K562 (cell line): ENCODE measurements at regions of chr6 and their contacts with region 1.

Region 1: DNA sequence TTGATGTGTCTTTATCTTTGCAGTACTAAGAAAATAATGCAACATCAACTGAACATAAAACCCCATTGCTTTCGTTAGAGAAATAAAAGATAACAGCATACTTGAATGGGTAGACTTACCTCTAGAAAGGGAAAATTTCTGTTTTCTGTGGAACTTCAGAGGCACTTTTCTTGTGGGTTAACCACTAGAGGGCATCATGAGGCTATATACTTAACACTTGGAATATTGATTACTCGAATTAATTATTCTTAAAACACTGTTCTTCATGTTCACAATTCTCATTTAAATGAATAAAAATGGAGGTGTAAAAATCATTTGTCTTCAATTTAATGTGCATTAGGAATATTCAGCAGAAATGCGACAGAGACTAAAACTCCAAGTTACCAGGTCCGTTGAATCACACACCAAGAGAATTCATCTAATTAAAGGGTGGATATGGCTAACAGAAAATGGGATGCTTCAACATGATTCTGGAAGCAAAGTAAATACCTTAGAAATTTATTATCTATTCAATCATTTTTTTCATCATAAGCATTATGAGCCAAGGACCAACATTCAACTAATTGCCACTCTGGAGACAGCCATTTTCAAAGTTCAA is 330.8 kb upstream of the PREP start:
- DNase-seq: peak; percentile 12 to 47 (median 16)
- ATAC-seq: no peak
- H3K4me3 ChIP-seq: no peak overlapping the region
- H3K27ac ChIP-seq: no peak overlapping the region
- H3K4me1 ChIP-seq: no peaks in the 10 kb centered on the region
- H3K27me3 ChIP-seq: no peaks in the 10 kb centered on the region
- CTCF ChIP-seq: peak; percentile 44 to 72 (median 48); a peak in 4 of 6 replicates
- EP300 ChIP-seq: no peak
- POLR2A ChIP-seq: no peak
- RAD21 ChIP-seq: peak; percentile 65 to 88

Region 2: DNA sequence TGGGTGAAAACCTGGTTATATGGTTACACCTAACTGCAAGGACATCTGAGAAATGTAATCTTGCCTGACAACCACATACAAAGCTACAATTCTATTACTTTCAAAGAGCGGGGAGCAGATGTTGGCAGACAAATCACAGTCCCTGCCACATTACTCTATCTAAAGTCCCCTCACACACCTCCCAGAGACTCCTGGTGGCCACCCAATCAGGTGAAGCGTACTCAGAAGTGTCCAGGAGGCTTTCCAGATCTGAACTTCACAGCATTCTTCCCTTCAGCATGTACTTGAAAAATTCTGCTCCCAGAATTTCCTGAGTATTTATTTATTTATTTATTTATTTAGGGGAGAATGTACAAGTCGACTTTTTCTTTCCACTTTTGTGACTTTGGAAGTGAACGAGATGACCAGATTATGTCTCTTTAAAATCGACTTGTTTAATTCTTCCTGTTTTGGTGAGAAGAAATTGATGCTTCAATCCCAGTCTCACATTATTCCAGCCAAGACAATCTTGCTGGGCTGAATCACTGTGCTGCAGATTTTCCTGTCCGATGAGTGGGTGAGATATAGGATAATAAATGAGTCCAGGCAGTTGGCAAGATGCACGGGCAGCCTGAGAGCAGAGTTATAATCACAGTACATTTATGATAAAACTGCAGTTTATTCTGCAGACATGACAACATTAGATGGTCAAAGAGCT is 506.9 kb before region 1 on chr6:
- CTCF ChIA-PET with region 1: no interaction called
- POLR2A ChIA-PET with region 1: no interaction called
- in situ Hi-C with region 1: no loop called
- intact Hi-C with region 1: no loop called
- DNase-seq: no peak
- ATAC-seq: no peak
- H3K4me3 ChIP-seq: no peak overlapping the region
- H3K27ac ChIP-seq: no peak overlapping the region
- H3K4me1 ChIP-seq: no peaks in the 10 kb centered on the region
- H3K27me3 ChIP-seq: peaks cover 0 to 6% of the 10 kb centered on the region in 2 experiments; a peak in 2 of 5 replicates
- CTCF ChIP-seq: no peak
- EP300 ChIP-seq: no peak
- POLR2A ChIP-seq: no peak
- RAD21 ChIP-seq: no peak

Region 3: DNA sequence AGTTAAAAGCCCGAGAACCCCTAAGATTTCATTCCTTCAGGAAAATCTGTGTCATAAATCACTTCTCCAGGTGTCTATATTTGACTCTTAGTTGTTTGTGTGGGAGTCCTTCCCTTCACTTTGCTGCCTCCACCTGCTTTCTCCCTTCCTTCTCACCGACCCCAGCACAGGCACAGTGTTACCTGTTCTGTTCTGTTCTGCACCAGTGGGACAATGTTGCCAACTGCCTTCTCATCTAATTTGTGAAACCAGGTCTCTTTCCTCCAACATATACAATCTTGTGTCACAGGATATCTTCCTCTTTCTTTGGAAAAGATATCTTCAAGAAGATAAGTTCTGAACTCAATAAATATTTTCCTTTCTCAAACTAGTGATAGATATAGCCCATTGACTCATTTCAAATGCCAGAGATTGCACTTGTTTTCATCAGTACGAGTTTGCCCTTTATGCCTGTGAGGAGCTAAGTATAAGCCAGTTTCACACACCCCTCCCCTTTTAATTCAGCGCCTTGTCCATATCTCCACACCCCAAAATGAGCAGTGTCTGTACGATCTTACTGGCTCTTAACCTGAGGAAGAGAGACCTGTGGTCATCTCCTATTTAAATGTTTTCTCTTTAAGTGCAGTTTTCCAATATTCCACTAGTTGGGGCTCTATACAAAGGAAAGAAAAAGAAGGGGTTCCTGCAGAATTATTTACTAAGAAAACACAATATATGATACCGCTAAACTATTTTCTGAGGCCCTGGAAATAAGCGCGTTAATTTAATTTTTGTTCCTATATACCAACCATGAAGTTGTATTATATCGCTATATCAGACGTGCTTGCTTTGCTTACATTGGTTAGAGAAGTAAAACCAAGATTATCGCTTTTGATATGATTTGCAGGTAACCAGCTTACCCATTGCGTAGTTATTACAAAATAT is 249.2 kb before region 1 on chr6:
- CTCF ChIA-PET with region 1: no interaction called
- POLR2A ChIA-PET with region 1: no interaction called
- in situ Hi-C with region 1: no loop called
- intact Hi-C with region 1: loop called (anchors 5 kb)
- DNase-seq: peak; percentile 25 to 31 (median 28)
- ATAC-seq: peak; percentile 76
- H3K4me3 ChIP-seq: no peak overlapping the region
- H3K27ac ChIP-seq: no peak overlapping the region
- H3K4me1 ChIP-seq: no peaks in the 10 kb centered on the region; a peak in 2 of 5 replicates
- H3K27me3 ChIP-seq: peaks cover 2 to 4% of the 10 kb centered on the region in 2 experiments; a peak in 1 of 5 replicates
- CTCF ChIP-seq: peak; percentile 61 to 90 (median 67); a peak in 5 of 6 replicates
- EP300 ChIP-seq: no peak
- POLR2A ChIP-seq: no peak
- RAD21 ChIP-seq: peak; percentile 90 to 91

Region 4: GRCh38 chr6:105748737-105749161 is 15.1 kb after region 1 on chr6:
- CTCF ChIA-PET with region 1: no interaction called
- POLR2A ChIA-PET with region 1: no interaction called
- in situ Hi-C with region 1: no loop called
- intact Hi-C with region 1: no loop called
- DNase-seq: peak in 1 of 4 experiments; percentile 11
- ATAC-seq: peak; percentile 42; the same call in 2 of the 3 replicates
- H3K4me3 ChIP-seq: no peak overlapping the region
- H3K27ac ChIP-seq: no peak overlapping the region
- H3K4me1 ChIP-seq: peaks cover 0 to 15% of the 10 kb centered on the region in 2 experiments; a peak in 3 of 5 replicates
- H3K27me3 ChIP-seq: 0 out of 5 replicates have a peak, but pooled peaks cover 0 to 4% of the 10 kb centered on the region in 2 experiments
- CTCF ChIP-seq: no peak
- EP300 ChIP-seq: no peak
- POLR2A ChIP-seq: no peak
- RAD21 ChIP-seq: no peak

Region 5: GRCh38 chr6:105835373-105835772 is 101.7 kb after region 1 on chr6:
- CTCF ChIA-PET with region 1: no interaction called
- POLR2A ChIA-PET with region 1: no interaction called
- in situ Hi-C with region 1: no loop called
- intact Hi-C with region 1: loop called (anchors 1 kb)
- DNase-seq: peak; percentile 40 to 79 (median 62)
- ATAC-seq: peak; percentile 97
- H3K4me3 ChIP-seq: no peak overlapping the region
- H3K27ac ChIP-seq: no peak overlapping the region
- H3K4me1 ChIP-seq: peaks cover 0 to 16% of the 10 kb centered on the region in 2 experiments; a peak in 3 of 5 replicates
- H3K27me3 ChIP-seq: no peaks in the 10 kb centered on the region
- CTCF ChIP-seq: peak; percentile 73 to 80 (median 79)
- EP300 ChIP-seq: peak; percentile 39; the same call in 1 of the 2 replicates
- POLR2A ChIP-seq: no peak
- RAD21 ChIP-seq: peak; percentile 75 to 87

Region 6: GRCh38 chr6:106223300-106223930 is 489.8 kb after region 1 on chr6:
- CTCF ChIA-PET with region 1: no interaction called
- POLR2A ChIA-PET with region 1: no interaction called
- in situ Hi-C with region 1: no loop called
- intact Hi-C with region 1: loop called (anchors 5 kb)
- DNase-seq: peak; percentile 13 to 71 (median 30)
- ATAC-seq: peak; percentile 81
- H3K4me3 ChIP-seq: no peak overlapping the region
- H3K27ac ChIP-seq: no peak overlapping the region
- H3K4me1 ChIP-seq: peaks cover 0 to 5% of the 10 kb centered on the region in 2 experiments; a peak in 1 of 5 replicates
- H3K27me3 ChIP-seq: no peaks in the 10 kb centered on the region
- CTCF ChIP-seq: peak in 2 of 3 experiments; percentile 61 to 80; a peak in 5 of 6 replicates
- EP300 ChIP-seq: no peak
- POLR2A ChIP-seq: no peak
- RAD21 ChIP-seq: peak; percentile 86 to 88

Region 7: GRCh38 chr6:106300944-106301343 is 567.3 kb after region 1 on chr6:
- CTCF ChIA-PET with region 1: interaction called, 9 read pairs
- POLR2A ChIA-PET with region 1: no interaction called
- in situ Hi-C with region 1: no loop called
- intact Hi-C with region 1: loop called (anchors 10 kb)
- DNase-seq: peak in 2 of 4 experiments; percentile 17 to 38
- ATAC-seq: peak; percentile 72
- H3K4me3 ChIP-seq: no peak overlapping the region
- H3K27ac ChIP-seq: no peak overlapping the region
- H3K4me1 ChIP-seq: no peaks in the 10 kb centered on the region
- H3K27me3 ChIP-seq: no peaks in the 10 kb centered on the region
- CTCF ChIP-seq: peak in 2 of 3 experiments; percentile 35 to 55; a peak in 4 of 6 replicates
- EP300 ChIP-seq: no peak
- POLR2A ChIP-seq: no peak
- RAD21 ChIP-seq: peak; percentile 64 to 70